ENCODE measurements at regions of chr13 and their contacts with region 1.

Region 1: GRCh38 chr13:110220471-110220870 is 86.5 kb downstream of the COL4A1 start:
- DNase-seq: no peak

Region 2: DNA sequence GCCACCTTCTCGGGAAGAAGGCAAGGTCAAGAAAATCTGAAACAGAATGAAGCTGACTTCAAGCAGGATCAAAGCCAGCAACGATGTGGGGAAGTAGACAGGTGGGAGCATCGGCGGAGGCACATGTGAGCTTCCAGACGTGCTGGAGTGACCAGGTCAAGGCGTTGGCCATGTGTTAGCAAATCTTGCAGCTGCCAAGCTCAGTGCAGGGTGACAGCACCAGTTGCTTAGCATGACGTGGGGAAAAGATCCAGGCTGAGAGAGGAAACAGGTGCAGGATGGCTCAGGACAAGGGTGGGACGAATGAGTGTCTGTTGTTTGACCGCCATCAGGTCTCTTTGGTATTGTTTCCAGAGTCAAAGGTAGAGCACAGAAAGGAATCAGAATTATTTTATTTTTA is 1858.7 kb before region 1 on chr13:
- intact Hi-C with region 1: no loop called
- DNase-seq: no peak

Region 3: GRCh38 chr13:110306960-110307746 is 86.7 kb after region 1 on chr13 and contains the starts of genes COL4A1 and COL4A2:
- intact Hi-C with region 1: loop called in 1 of 2 experiments (anchors 5 kb)
- DNase-seq: peak; percentile 95
- total RNA-seq, gene COL4A1: 830 to 1,061 TPM
- total RNA-seq, gene COL4A2: 816 to 963 TPM

Region 4: DNA sequence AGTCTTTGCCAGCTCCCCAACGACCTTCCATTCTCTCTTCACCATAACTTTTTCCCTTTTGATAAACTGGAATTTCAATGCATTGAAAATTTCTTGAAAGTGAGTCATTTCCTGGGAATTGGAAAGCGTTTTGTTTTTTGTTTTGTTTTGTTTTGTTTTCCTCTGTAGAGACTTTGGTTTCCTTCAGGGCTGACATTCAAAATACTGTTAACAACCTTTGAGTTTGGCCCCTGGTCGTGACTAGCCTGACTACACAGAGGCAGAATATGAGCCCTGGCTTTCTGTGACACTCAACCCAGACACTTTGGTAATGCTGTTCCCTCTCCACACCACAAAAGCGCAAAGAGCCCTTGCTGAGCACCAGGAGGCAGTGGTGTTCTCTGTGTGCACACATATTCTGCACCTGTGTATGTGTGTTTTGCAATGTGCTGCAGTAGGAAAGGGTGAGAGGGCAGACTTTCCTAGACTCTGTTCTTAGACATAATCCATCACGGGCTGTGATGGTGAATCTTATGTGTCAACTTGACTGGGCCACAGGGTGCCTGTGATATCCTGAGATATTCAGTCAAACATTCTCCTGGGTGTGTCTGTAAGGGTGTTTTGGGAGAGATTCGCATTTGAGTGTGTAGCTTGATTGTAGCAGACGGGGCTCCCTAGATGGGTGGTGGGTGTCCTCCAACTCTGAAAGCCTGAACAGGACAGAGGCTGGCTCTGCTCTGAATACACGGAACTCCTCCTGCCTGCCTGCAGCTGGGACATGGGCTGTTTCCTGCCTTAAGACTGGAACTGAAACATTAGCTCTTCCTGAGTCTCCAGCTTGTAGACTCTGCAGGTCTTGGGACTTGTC is 723.9 kb after region 1 on chr13:
- intact Hi-C with region 1: no loop called
- DNase-seq: no peak

Region 5: DNA sequence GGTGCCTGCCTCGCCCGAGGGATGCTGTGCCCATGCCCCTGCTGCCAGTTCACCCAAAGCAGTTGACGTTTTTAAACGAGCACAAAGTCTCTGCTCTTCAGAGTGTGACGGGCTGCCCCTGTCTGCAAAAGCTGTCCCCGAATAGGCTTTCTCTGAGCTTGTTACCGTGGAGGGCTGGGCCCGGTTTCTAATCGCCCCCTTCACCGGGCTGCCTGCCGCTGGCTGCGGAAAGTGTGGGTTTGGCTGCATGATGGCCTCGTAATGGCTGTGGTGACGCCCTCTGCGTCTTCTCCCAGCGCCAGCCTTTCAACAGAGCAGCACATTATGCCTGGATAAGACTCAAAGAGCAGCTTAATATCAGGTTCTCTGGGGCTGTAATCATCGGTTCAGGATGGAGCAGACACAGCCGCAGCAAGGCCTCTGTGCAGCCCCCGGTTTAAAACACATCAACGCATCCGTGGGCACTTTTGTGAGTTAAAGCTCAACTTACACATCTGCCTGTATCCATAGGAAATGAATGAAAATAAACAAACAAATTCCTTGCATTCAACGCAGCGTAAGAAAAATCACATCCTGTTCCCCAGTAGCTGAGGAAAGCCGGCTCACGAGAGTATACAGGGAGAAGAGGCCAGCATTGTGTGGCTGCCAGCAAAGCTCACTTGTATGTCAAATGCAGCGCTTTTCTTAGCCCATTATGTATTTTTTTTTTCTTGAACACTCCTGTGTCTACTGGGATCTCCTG is 1680.1 kb after region 1 on chr13:
- intact Hi-C with region 1: no loop called
- DNase-seq: peak; percentile 67